ENCODE measurements at regions of chr17 and their contacts with region 1.

Region 1: DNA sequence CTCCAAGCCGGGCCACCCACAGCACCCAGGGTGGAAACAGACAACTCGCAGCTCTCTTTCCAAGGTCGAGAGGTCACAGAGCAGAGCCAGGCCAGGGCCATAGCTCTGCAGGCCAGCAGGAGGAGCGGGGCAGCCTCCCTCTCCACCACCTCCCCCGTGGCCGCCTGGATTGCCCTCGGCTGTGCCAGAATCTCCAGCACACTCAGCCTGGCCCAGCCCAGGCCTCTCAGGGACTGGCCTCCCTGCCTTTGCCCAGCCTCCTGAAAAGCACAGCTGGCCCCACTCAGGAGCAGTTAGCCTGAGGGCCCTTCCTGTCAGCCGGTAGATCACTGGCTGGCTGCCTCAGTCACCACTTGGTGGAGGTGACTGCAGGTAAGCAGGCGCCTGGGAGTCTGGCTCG is 85.8 kb upstream of the SEC14L1 start:
- DNase-seq: no peak
- H3K4me3 Mint-ChIP-seq: no peak overlapping the region
- H3K27ac Mint-ChIP-seq: no peak overlapping the region
- H3K4me1 Mint-ChIP-seq: peaks cover 2% of the 10 kb centered on the region
- H3K27me3 Mint-ChIP-seq: peaks cover 9% of the 10 kb centered on the region

Region 2: DNA sequence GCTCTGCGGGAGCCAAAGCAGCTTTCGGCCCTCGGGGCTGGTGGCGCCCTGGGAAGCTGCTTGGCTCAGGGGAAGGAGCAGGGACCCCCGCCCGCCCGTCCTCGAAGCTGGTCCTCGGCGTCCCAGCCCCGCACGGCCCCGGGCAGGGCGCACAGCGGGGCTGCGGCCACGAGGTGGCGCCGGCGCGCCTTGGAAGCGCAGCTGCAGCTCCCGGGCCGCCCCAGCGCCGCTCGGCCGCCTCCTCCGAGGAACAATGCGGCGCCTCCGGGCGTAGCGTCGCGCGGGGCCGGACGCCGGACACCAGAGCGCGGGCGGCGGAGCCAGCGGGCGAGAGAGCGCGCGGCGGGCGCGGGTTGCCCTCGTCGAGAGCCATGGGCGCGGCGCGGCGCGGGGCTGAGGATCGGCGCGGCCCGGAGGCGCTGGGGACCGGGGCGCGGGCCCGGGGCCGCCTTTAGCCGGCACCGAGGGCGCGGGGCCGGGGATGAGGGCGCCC is 186.7 kb before region 1 on chr17 and contains the start of gene MGAT5B:
- CTCF ChIA-PET with region 1: interaction called, 87 read pairs
- POLR2A ChIA-PET with region 1: no interaction called
- intact Hi-C with region 1: loop called (anchors 1 kb)
- DNase-seq: peak; percentile 77
- H3K4me3 Mint-ChIP-seq: peak within 1 kb of the TSS; percentile 59
- H3K27ac Mint-ChIP-seq: no peak within 1 kb of the TSS
- H3K4me1 Mint-ChIP-seq: peaks cover 9% of the 10 kb centered on the region
- H3K27me3 Mint-ChIP-seq: peaks cover 18% of the 10 kb centered on the region
- total RNA-seq, gene MGAT5B: 0.38 TPM in 1 of 2 experiments, not detected in the other

Region 3: DNA sequence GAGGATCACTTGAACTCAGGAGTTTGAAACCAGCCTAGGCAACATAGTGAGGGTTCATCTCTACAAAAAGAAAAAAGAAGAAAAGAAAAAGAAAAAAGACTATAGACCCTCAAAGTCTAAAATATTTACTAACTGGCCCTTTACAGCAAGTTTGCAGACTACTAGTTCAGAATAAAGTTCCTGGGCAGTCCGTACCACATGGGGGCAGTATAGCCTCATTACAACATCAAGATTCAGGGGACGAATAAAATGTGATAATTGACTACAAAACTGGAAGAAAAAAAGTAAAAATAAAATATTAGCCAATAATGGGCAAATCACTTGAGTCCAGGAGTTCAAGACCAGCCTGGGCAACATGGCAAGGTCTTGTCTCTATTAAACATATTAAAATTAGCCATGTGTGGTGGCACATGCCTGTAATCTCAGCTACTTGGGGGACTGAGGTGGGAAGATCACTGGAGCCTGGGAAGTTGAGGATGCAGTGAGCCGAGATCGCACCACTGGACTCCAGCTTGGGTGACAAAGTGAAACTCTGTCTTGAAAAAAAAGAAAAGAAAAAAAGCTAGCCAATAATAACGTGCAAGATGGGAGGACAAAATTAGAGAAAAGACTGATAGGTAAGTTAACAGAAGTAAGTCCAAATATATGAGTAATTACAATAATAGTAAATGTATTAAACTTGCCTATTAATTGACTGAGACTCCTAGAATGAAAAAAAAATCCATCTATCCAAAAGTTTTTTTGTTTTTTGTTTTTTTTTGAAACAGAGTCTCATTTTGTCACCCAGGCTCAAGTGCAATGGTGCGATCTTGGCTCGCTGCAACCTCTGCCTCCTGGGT is 43.5 kb before region 1 on chr17:
- CTCF ChIA-PET with region 1: interaction called, 21 read pairs
- POLR2A ChIA-PET with region 1: no interaction called
- intact Hi-C with region 1: loop called (anchors 2 kb)
- DNase-seq: peak; percentile 65
- H3K4me3 Mint-ChIP-seq: no peak overlapping the region
- H3K27ac Mint-ChIP-seq: no peak overlapping the region
- H3K4me1 Mint-ChIP-seq: no peaks in the 10 kb centered on the region
- H3K27me3 Mint-ChIP-seq: peaks cover 5% of the 10 kb centered on the region

Region 4: GRCh38 chr17:77036807-77037381 is 18.0 kb before region 1 on chr17:
- CTCF ChIA-PET with region 1: interaction called, 17 read pairs
- POLR2A ChIA-PET with region 1: no interaction called
- intact Hi-C with region 1: no loop called
- DNase-seq: no peak
- H3K4me3 Mint-ChIP-seq: no peak overlapping the region
- H3K27ac Mint-ChIP-seq: no peak overlapping the region
- H3K4me1 Mint-ChIP-seq: no peaks in the 10 kb centered on the region
- H3K27me3 Mint-ChIP-seq: peaks cover 9% of the 10 kb centered on the region

Region 5: GRCh38 chr17:77042476-77043231 is 12.3 kb before region 1 on chr17:
- CTCF ChIA-PET with region 1: interaction called, 17 read pairs
- POLR2A ChIA-PET with region 1: interaction called, 3 read pairs
- intact Hi-C with region 1: no loop called
- DNase-seq: no peak
- H3K4me3 Mint-ChIP-seq: no peak overlapping the region
- H3K27ac Mint-ChIP-seq: no peak overlapping the region
- H3K4me1 Mint-ChIP-seq: no peaks in the 10 kb centered on the region
- H3K27me3 Mint-ChIP-seq: peaks cover 2% of the 10 kb centered on the region

Region 6: DNA sequence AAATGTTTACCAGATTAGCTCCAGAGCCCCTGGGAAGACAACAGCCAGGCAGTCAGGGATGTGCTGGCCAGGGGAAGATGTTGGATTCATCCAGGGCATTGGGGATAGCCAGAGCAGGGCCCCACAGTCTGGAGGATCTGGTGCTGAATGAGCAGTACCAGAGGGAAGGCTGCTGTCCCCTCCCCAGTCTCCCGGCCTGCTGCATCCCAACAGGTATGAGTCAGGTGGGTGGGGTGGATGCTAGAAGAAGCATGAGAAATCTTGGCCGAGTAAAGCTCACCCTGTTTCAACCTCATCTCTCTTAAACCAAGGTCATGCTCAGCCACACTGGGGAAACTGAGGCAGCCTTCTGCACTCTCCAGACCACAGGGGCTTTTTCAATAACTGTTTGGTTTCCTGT is 14.0 kb after region 1 on chr17:
- CTCF ChIA-PET with region 1: interaction called, 41 read pairs
- POLR2A ChIA-PET with region 1: no interaction called
- intact Hi-C with region 1: no loop called
- DNase-seq: no peak
- H3K4me3 Mint-ChIP-seq: no peak overlapping the region
- H3K27ac Mint-ChIP-seq: no peak overlapping the region
- H3K4me1 Mint-ChIP-seq: no peaks in the 10 kb centered on the region
- H3K27me3 Mint-ChIP-seq: peaks cover 24% of the 10 kb centered on the region

Region 7: DNA sequence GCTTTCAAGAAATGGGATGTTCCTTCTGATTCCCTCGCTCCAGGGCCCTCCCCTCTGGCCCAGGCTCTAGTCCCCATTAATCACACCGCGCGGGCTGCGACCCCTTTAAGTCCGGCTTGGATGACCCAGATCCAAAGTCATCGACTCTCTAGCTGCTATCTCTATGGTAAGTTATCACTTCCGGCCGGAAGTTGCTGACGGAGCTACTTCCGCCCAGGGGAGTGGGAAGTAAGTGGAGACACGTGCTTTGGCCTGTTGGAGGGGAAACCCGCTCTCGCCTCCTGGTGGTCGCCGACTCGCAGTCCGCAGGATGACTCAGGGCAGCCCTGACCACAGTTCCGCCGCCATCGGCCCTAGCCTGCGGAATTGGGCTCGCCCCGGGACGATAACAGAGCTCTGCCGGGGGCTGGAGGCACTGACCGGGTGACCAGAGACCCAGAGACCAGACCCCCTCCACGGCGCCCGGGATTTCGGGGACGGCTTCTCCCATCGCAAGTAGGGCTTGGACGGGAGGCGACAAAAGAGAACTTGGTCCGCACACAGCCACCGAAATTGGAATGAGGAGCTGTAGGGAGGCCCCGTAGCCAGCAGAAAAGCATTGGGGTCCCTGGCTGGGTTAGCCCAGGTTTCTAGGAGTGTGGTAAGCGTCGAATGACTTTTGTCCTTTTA is 33.7 kb after region 1 on chr17:
- CTCF ChIA-PET with region 1: interaction called, 11 read pairs
- POLR2A ChIA-PET with region 1: no interaction called
- intact Hi-C with region 1: no loop called
- DNase-seq: peak; percentile 92
- H3K4me3 Mint-ChIP-seq: peak overlapping the region; percentile 89
- H3K27ac Mint-ChIP-seq: peak overlapping the region; percentile 94
- H3K4me1 Mint-ChIP-seq: peaks cover 53% of the 10 kb centered on the region
- H3K27me3 Mint-ChIP-seq: no peaks in the 10 kb centered on the region